GM10248 (cell line): ENCODE measurements at regions of chr4 and their contacts with region 1.

Region 1: GRCh38 chr4:48546336-48546735 is 56.3 kb downstream of the ZAR1 start:
- DNase-seq: no peak
- CTCF ChIP-seq: peak; percentile 51

Region 2: DNA sequence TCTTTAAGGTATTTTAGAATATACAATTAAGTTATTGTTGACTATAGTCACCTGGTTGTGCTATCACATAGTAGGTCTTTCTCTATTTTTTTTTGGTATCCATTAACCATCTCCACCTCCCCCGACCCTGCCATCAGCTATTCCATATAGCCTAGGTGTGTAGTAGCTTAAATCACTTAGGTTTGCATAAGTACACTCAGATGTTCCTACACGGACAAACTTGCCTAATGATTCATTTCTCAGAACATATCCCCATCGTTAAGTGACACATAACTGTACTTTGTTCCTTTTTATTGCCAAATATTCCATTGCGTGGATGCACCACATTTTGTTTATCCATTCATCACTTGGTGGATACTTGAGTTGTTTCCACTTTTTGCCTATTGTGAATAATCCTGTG is 137.1 kb before region 1 on chr4:
- CTCF ChIA-PET with region 1: no interaction called
- POLR2A ChIA-PET with region 1: no interaction called
- DNase-seq: no peak
- CTCF ChIP-seq: no peak

Region 3: GRCh38 chr4:48526406-48526805 is 19.9 kb before region 1 on chr4:
- CTCF ChIA-PET with region 1: interaction called, 11 read pairs
- POLR2A ChIA-PET with region 1: no interaction called
- DNase-seq: no peak
- CTCF ChIP-seq: no peak